ENCODE measurements at regions of chr5 and their contacts with region 1.

Region 1: DNA sequence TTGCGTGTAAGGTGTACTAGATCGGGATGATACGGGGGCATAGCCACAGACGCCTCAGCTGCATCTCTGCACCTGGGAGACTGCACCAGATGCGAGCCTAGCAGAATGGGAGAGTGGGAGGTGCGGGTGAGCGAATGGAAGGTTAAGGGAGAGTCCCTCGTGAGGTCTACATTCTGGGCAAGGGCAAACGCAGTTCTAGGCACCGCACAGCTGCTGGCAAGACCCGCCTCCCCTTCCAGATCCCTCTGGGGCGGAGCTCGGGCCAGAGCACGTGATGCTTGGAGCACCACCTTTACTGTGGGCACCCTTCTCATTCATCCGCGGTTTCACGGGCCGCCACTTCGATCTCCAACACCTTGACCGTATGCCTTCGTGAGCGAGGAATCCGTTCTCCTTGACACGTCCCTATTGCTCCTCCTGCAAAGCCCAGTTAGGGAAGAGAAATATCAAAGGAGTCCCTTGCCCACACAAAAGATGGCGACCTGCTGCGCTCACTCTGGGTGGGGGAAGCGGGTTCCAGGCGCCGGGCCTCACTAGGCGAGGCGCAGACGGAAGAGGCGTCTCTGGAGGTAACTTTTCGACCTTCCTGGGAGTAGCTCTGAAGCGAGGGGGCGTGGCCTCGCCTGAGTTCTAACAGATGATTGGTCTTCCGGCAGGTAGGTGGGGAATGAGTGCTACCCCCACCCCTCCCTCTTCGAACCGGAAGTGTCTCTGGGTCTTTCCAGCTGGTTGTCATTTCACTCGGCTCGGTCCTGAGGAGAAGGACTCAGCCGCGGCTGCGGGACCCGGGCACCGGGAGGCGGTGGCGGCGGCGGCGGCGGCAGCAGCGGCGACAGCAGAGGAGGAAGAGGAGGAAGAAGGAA is at the start of gene CPEB4:
- DNase-seq: peak; percentile 96 to 99 (median 98)
- H3K4me3 ChIP-seq: peak within 1 kb of the TSS; percentile 52 to 68
- H3K4me3 Mint-ChIP-seq: peak within 1 kb of the TSS; percentile 95 to 99 (median 98)
- H3K27ac ChIP-seq: peak within 1 kb of the TSS; percentile 68
- H3K27ac Mint-ChIP-seq: peak within 1 kb of the TSS; percentile 91 to 99 (median 98)
- H3K4me1 ChIP-seq: peaks cover 81% of the 10 kb centered on the region
- H3K4me1 Mint-ChIP-seq: peaks cover 69 to 92% (median 76%) of the 10 kb centered on the region in 4 donors
- H3K27me3 ChIP-seq: no peaks in the 10 kb centered on the region
- H3K27me3 Mint-ChIP-seq: no peaks in the 10 kb centered on the region
- total RNA-seq, gene CPEB4: 17.1 to 18.3 TPM

Region 2: DNA sequence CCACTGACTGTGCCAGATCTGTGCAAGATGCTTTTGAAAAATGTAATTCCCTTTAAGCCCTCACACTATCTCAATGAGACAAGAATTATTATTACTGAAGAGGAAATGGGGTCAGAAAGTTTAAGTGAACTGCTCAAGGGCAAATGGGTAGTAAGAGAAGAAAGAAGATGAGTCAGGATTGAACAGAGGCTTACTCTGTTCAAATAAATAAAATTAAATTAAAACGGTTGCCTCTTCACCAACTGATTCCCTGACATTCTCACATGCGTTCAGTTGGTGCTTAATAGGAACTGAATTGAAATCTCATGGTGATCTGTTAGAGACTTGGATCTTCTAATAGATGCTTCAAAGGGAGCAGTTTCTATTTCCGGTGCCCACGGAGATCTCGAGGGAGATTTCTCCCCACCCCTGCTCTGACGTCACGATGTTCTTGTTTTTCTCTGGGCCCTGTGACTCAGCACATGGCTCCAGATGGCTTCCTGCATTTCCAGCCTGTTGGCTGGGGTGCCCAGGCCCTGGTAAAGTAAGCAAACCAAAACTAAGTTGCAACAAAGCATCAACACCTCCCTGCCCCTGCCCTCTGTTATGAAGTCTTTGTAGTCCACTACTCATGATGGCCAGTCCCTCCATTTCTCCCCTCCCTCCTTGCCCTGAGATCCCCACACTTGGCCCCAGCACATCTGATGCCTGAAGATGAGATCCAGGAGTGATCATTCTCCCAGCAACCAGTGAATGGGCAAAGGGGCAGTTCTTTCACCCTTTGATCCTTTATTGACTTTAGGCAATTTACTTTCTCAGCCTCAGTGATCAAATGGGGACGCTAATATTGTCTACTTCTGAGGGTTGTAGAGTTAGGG is 105.8 kb before region 1 on chr5:
- CTCF ChIA-PET with region 1: no interaction called
- POLR2A ChIA-PET with region 1: interaction called, 5 read pairs
- intact Hi-C with region 1: loop called (anchors 2 kb)
- DNase-seq: peak; percentile 71 to 84 (median 73)
- H3K4me3 ChIP-seq: no peak overlapping the region
- H3K4me3 Mint-ChIP-seq: peak overlapping the region in 7 of 8 donors; percentile 5 to 64 (median 57)
- H3K27ac ChIP-seq: peak overlapping the region; percentile 6
- H3K27ac Mint-ChIP-seq: peak overlapping the region; percentile 81 to 96 (median 90)
- H3K4me1 ChIP-seq: peaks cover 21% of the 10 kb centered on the region
- H3K4me1 Mint-ChIP-seq: peaks cover 11 to 50% (median 20%) of the 10 kb centered on the region in 4 donors
- H3K27me3 ChIP-seq: no peaks in the 10 kb centered on the region
- H3K27me3 Mint-ChIP-seq: no peaks in the 10 kb centered on the region

Measured in CD4-positive, alpha-beta memory T cell (primary cell).